Activated CD8-positive, alpha-beta T cell treated with anti-CD3 and anti-CD28 coated beads, Interleukin-2, amount 10 ng/mL, durations not matched to agents 7 days and 5 days (primary cell): ENCODE measurements at regions of chr9 and their contacts with region 1.

Region 1: DNA sequence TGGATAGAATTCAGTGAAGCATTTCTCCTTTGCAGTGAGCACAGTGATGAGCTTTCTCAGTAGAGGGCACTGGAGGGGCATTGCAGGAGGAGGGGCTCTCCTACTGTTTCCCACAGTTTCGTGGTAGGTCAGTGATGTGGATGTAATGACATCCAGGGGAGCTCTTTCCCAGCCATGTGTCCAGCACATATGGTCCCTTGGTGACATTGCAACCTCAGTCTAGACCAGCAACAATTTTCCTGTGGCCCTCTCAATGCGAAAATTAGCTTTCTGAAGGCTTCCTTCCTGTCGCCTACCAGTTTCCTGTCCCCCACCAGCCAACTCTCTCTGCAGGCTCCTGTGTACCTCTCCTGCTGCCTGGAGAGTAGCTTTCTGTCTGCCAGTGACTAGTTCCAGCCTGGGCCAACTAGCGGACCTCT is 6.9 kb upstream of the PDCL start:
- DNase-seq: peak; percentile 62
- ATAC-seq: peak; percentile 85
- H3K4me3 Mint-ChIP-seq: peak overlapping the region; percentile 59
- H3K27ac Mint-ChIP-seq: peak overlapping the region; percentile 91
- H3K4me1 Mint-ChIP-seq: peaks cover 21% of the 10 kb centered on the region
- H3K27me3 Mint-ChIP-seq: no peaks in the 10 kb centered on the region

Region 2: GRCh38 chr9:122168356-122168755 is 667.0 kb before region 1 on chr9:
- CTCF ChIA-PET with region 1: no interaction called
- POLR2A ChIA-PET with region 1: no interaction called
- DNase-seq: no peak
- ATAC-seq: no peak
- H3K4me3 Mint-ChIP-seq: no peak overlapping the region
- H3K27ac Mint-ChIP-seq: no peak overlapping the region
- H3K4me1 Mint-ChIP-seq: no peaks in the 10 kb centered on the region
- H3K27me3 Mint-ChIP-seq: peaks cover 31% of the 10 kb centered on the region

Region 3: GRCh38 chr9:122797316-122798063 is 37.8 kb before region 1 on chr9:
- CTCF ChIA-PET with region 1: no interaction called
- POLR2A ChIA-PET with region 1: no interaction called
- DNase-seq: no peak
- ATAC-seq: no peak
- H3K4me3 Mint-ChIP-seq: no peak overlapping the region
- H3K27ac Mint-ChIP-seq: no peak overlapping the region
- H3K4me1 Mint-ChIP-seq: no peaks in the 10 kb centered on the region
- H3K27me3 Mint-ChIP-seq: no peaks in the 10 kb centered on the region

Region 4: GRCh38 chr9:122875523-122875922 is 40.2 kb after region 1 on chr9:
- CTCF ChIA-PET with region 1: no interaction called
- POLR2A ChIA-PET with region 1: no interaction called
- DNase-seq: no peak
- ATAC-seq: no peak
- H3K4me3 Mint-ChIP-seq: no peak overlapping the region
- H3K27ac Mint-ChIP-seq: peak overlapping the region; percentile 27
- H3K4me1 Mint-ChIP-seq: no peaks in the 10 kb centered on the region
- H3K27me3 Mint-ChIP-seq: no peaks in the 10 kb centered on the region

Region 5: DNA sequence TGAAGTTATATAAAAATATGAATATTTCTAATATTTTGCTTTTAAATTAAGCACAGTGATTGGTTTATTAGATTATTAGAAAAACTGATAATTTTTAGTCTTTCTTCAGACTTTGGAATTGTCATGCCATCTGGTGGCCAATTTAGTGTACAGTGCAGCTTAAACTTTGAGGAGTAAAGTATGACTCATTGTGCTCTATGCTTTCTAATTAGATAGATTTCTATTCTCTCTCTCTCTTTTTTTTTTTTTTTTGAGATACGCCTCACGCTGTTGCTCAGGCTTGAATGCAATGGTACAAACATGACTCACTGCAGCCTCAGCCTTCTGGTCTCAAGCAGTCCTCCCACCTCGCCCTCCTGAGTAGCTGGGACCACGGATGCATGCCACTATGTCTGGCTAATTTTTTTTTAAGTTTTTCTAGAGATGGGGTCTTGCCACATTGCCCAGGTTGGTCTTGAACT is 156.1 kb after region 1 on chr9:
- CTCF ChIA-PET with region 1: interaction called, 13 read pairs
- POLR2A ChIA-PET with region 1: no interaction called
- DNase-seq: peak; percentile 33
- ATAC-seq: peak; percentile 79
- H3K4me3 Mint-ChIP-seq: no peak overlapping the region
- H3K27ac Mint-ChIP-seq: no peak overlapping the region
- H3K4me1 Mint-ChIP-seq: peaks cover 4% of the 10 kb centered on the region
- H3K27me3 Mint-ChIP-seq: no peaks in the 10 kb centered on the region